Breast epithelium (tissue), 4 donors: ENCODE measurements at regions of chr2 and their contacts with region 1.

Region 1: DNA sequence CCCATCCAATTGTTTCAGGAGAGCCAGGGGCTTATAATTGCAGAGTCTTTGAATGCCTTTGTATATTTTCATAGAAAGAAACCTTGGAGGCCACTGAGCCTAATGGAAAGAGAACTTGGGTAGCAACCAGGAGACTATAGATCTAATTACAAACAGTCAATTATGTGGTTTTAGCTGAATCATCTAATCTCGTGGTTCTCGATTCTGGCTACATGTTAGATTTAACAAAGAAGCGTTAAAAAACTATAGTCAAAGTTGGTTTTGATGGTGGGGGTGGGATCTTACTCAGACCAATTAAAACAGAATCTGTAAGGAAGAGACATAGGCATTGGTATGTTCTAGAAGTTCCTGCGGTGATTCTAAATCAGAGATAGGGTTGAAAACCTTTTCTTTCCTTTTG is 344.1 kb downstream of the CNTNAP5 start:
- DNase-seq: no peak
- H3K4me3 ChIP-seq: no peak overlapping the region
- H3K27ac ChIP-seq: no peak overlapping the region
- H3K4me1 ChIP-seq: no peaks in the 10 kb centered on the region
- H3K27me3 ChIP-seq: no peaks in the 10 kb centered on the region
- CTCF ChIP-seq: no peak
- POLR2A ChIP-seq: no peak

Region 2: GRCh38 chr2:124289615-124290014 is 79.6 kb before region 1 on chr2:
- intact Hi-C with region 1: loop called (anchors 2 kb)
- DNase-seq: no peak
- H3K4me3 ChIP-seq: no peak overlapping the region
- H3K27ac ChIP-seq: no peak overlapping the region
- H3K4me1 ChIP-seq: no peaks in the 10 kb centered on the region
- H3K27me3 ChIP-seq: no peaks in the 10 kb centered on the region
- CTCF ChIP-seq: no peak
- POLR2A ChIP-seq: no peak

Region 3: GRCh38 chr2:124301915-124302314 is 67.3 kb before region 1 on chr2:
- intact Hi-C with region 1: no loop called
- DNase-seq: no peak
- H3K4me3 ChIP-seq: no peak overlapping the region
- H3K27ac ChIP-seq: no peak overlapping the region
- H3K4me1 ChIP-seq: no peaks in the 10 kb centered on the region
- H3K27me3 ChIP-seq: no peaks in the 10 kb centered on the region
- CTCF ChIP-seq: no peak
- POLR2A ChIP-seq: no peak

Region 4: GRCh38 chr2:124450481-124450880 is 81.3 kb after region 1 on chr2:
- intact Hi-C with region 1: loop called (anchors 2 kb)
- DNase-seq: no peak
- H3K4me3 ChIP-seq: no peak overlapping the region
- H3K27ac ChIP-seq: no peak overlapping the region
- H3K4me1 ChIP-seq: no peaks in the 10 kb centered on the region
- H3K27me3 ChIP-seq: no peaks in the 10 kb centered on the region
- CTCF ChIP-seq: no peak
- POLR2A ChIP-seq: no peak